ENCODE measurements at regions of chr20 and their contacts with region 1.

Region 1: DNA sequence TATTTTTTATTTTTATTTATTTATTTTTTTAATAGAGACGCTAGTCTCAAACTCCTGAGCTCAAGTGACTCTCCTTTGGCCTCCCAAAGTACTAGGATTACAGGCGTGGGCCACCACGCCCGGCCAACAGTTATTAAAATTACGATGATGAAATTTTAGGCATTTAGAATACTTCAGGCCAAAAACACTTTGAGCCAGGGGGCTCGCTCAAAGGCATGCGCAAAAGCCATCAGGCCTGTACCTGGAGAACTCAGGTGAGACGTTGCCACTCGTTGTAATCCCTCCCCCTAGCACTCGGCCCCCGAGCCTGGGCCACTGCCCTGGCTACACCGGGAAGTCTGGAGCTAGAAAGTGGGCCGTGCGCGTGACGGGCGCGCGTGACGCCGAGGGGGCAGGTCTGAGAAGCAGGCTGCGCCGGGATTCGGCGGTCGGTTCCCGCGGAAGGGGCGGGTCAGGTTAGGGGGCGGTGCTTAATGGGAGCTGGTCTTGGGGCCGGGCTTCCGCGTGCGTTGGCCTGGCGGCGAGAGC is 337 bp upstream of the CBFA2T2 start:
- DNase-seq: peak; percentile 98 to 100 (median 99)
- H3K4me3 ChIP-seq: peak overlapping the region; percentile 45 to 100 (median 82)
- H3K27ac ChIP-seq: peak overlapping the region; percentile 88 to 99 (median 97)
- H3K27me3 ChIP-seq: no peaks in the 10 kb centered on the region
- CTCF ChIP-seq: peak in 11 of 56 donors; percentile 2 to 42 (median 22)

Region 2: DNA sequence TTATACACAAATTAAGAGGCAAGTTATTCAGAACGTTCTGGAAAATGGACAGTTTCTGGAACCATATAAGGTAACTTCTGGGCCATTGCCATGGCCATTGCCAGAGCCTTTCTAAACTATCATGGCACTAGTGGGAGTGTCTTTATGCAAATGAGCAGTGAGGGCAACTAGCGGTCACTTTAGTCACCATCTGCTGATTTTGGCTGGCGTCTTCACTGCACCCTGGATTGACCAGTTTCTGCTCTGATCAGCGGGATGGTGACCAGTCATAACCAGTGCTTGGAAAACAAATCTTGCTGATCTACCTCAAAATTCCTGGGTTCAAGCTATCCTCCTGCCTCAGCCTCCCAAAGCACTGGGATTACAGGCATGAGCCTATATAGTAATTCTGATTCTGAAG is 38.7 kb before region 1 on chr20:
- intact Hi-C with region 1: loop called in 1 of 2 experiments (anchors 5 kb)
- DNase-seq: no peak
- H3K4me3 ChIP-seq: no peak overlapping the region
- H3K27ac ChIP-seq: no peak overlapping the region
- H3K27me3 ChIP-seq: no peaks in the 10 kb centered on the region
- CTCF ChIP-seq: no peak

Region 3: DNA sequence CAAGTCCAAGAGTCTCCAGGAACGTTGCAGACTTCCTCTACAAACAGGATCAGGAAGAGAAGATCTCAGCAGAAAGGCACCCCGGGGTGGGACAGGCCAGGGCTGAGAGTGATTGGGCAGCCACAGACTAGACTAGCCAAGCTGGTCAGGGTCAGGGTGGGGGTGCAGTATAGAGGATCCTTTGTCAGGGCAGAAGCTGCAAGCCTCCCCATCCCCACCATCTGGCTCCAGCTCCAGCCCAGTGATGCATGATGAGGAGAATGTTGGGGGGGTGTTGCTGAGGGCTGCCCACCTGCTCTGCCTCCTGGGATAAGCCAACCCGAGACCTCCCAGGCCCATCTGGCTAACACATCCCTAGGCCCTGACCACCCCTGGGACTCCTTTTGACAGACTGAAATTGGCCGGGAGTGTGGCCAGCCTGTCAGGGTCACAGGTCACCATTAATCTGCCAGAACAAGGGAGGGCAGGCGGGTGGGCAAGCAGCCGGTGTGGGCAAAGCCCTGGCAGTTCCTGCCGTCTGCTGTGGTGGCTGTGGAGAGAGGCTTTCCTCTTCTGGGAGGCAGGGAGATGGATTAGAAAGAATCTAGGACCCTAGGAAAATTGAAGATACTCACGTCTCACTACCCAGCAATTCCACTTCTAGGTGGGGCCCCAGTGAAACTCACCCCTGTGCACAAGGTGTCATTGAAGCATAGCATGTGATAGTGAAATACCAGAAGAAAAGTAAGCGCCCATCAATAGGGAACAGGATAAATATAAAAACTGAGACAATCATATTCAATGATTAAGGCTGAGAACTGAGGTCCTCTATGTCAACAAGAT is 23.9 kb before region 1 on chr20:
- intact Hi-C with region 1: loop called in 1 of 2 experiments (anchors 1 kb)
- DNase-seq: peak; percentile 39 to 93 (median 88)
- H3K4me3 ChIP-seq: peak overlapping the region in 25 of 59 donors; percentile 2 to 55 (median 15)
- H3K27ac ChIP-seq: peak overlapping the region in 58 of 59 donors; percentile 70 to 95 (median 90)
- H3K27me3 ChIP-seq: no peaks in the 10 kb centered on the region
- CTCF ChIP-seq: peak in 3 of 56 donors; percentile 5 to 11 (median 9)

Region 4: GRCh38 chr20:33561692-33562601 is 72.4 kb after region 1 on chr20:
- intact Hi-C with region 1: loop called in 1 of 2 experiments (anchors 10 kb)
- DNase-seq: peak in 4 of 10 donors; percentile 17 to 81 (median 45)
- H3K4me3 ChIP-seq: peak overlapping the region in 51 of 59 donors; percentile 1 to 56 (median 27)
- H3K27ac ChIP-seq: peak overlapping the region in 50 of 59 donors; percentile 1 to 86 (median 60)
- H3K27me3 ChIP-seq: no peaks in the 10 kb centered on the region
- CTCF ChIP-seq: peak in 2 of 56 donors; percentile 13 to 23

Region 5: DNA sequence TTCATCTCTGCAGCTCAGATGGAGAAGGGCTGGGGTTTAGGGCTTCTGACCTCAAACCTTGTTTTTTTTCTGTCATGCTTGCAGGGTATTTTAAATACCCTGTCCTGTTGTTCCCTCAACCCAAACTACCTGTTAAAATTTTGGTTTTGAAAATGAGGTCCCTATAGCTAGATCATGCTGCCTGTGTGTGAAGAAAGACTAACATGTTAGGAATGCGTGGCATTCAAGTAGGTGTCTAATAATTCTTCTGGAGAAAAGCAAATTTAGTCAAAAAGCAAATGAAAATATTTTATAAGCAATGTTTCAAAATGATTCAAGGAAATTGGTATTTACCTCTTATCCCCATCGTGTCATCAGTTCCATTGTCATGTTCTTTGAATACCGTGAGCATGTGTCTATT is 95.4 kb after region 1 on chr20:
- intact Hi-C with region 1: no loop called
- DNase-seq: no peak
- H3K4me3 ChIP-seq: no peak overlapping the region
- H3K27ac ChIP-seq: no peak overlapping the region
- H3K27me3 ChIP-seq: no peaks in the 10 kb centered on the region
- CTCF ChIP-seq: no peak

Region 6: GRCh38 chr20:33673258-33673938 is 183.8 kb after region 1 on chr20:
- intact Hi-C with region 1: no loop called
- DNase-seq: no peak
- H3K4me3 ChIP-seq: peak overlapping the region; percentile 56 to 92 (median 77)
- H3K27ac ChIP-seq: peak overlapping the region; percentile 58 to 96 (median 89)
- H3K27me3 ChIP-seq: no peaks in the 10 kb centered on the region
- CTCF ChIP-seq: no peak

Measured in dorsolateral prefrontal cortex (tissue), 120 donors.